ENCODE measurements at regions of chr15 and their contacts with region 1.

Region 1: GRCh38 chr15:91271565-91272153 is 171.6 kb downstream of the SV2B start:
- DNase-seq: peak; percentile 62 to 70 (median 70)
- H3K4me3 ChIP-seq: no peak overlapping the region
- H3K4me3 Mint-ChIP-seq: peak overlapping the region in 1 of 2 donors; percentile 55
- H3K27ac ChIP-seq: no peak overlapping the region
- H3K27ac Mint-ChIP-seq: no peak overlapping the region
- H3K4me1 ChIP-seq: no peaks in the 10 kb centered on the region
- H3K4me1 Mint-ChIP-seq: peaks cover 3% of the 10 kb centered on the region
- H3K27me3 ChIP-seq: peaks cover 0 to 4% of the 10 kb centered on the region in 2 donors
- H3K27me3 Mint-ChIP-seq: peaks cover 2 to 11% (median 3%) of the 10 kb centered on the region in 3 donors
- CTCF ChIP-seq: peak; percentile 88

Region 2: GRCh38 chr15:91055548-91056331 is 215.9 kb before region 1 on chr15:
- intact Hi-C with region 1: loop called (anchors 2 to 5 kb)
- DNase-seq: peak; percentile 35 to 59 (median 55)
- H3K4me3 ChIP-seq: no peak overlapping the region
- H3K4me3 Mint-ChIP-seq: peak overlapping the region; percentile 44 to 65
- H3K27ac ChIP-seq: no peak overlapping the region
- H3K27ac Mint-ChIP-seq: no peak overlapping the region
- H3K4me1 ChIP-seq: peaks cover 4 to 5% of the 10 kb centered on the region in 2 donors
- H3K4me1 Mint-ChIP-seq: peaks cover 10% of the 10 kb centered on the region
- H3K27me3 ChIP-seq: peaks cover 29 to 30% of the 10 kb centered on the region in 2 donors
- H3K27me3 Mint-ChIP-seq: peaks cover 31 to 59% (median 38%) of the 10 kb centered on the region in 3 donors
- CTCF ChIP-seq: peak; percentile 74

Measured in CD14-positive monocyte (primary cell).